A673 (cell line): ENCODE measurements at regions of chr12 and their contacts with region 1.

Region 1: GRCh38 chr12:17197971-17198370 is 592.0 kb upstream of the LMO3 start:
- DNase-seq: no peak
- H3K4me3 ChIP-seq: no peak overlapping the region
- H3K27ac ChIP-seq: no peak overlapping the region
- H3K4me1 ChIP-seq: no peaks in the 10 kb centered on the region
- H3K27me3 ChIP-seq: no peaks in the 10 kb centered on the region
- CTCF ChIP-seq: no peak

Region 2: GRCh38 chr12:16385782-16386646 is 812.0 kb before region 1 on chr12:
- CTCF ChIA-PET with region 1: no interaction called
- POLR2A ChIA-PET with region 1: no interaction called
- intact Hi-C with region 1: no loop called
- DNase-seq: peak; percentile 91
- H3K4me3 ChIP-seq: no peak overlapping the region
- H3K27ac ChIP-seq: peak overlapping the region; percentile 48
- H3K4me1 ChIP-seq: peaks cover 13% of the 10 kb centered on the region
- H3K27me3 ChIP-seq: no peaks in the 10 kb centered on the region
- CTCF ChIP-seq: peak; percentile 75

Region 3: DNA sequence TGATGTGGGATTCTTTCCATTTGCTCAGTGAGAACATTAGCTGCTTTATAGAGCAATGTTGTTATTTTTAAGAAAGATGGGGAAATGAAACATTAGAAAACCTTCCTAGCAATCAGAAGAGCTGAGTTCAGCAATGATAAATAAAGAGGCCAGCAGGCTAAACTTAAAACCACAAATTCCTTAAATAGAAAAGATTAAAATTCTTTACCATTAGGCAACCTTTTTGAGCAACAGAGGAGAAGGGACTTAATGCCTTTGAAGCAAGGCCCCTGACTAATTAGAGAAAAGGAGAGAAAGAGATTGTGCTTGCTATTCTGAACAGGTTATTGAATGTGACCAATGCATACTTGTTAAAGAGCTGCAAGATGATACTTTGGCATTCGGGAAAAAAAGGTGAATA is 431.2 kb before region 1 on chr12:
- CTCF ChIA-PET with region 1: no interaction called
- POLR2A ChIA-PET with region 1: no interaction called
- intact Hi-C with region 1: no loop called
- DNase-seq: peak; percentile 34
- H3K4me3 ChIP-seq: no peak overlapping the region
- H3K27ac ChIP-seq: no peak overlapping the region
- H3K4me1 ChIP-seq: peaks cover 6% of the 10 kb centered on the region
- H3K27me3 ChIP-seq: no peaks in the 10 kb centered on the region
- CTCF ChIP-seq: no peak

Region 4: GRCh38 chr12:17151917-17152316 is 46.1 kb before region 1 on chr12:
- CTCF ChIA-PET with region 1: no interaction called
- POLR2A ChIA-PET with region 1: no interaction called
- intact Hi-C with region 1: loop called (anchors 5 kb)
- DNase-seq: no peak
- H3K4me3 ChIP-seq: no peak overlapping the region
- H3K27ac ChIP-seq: no peak overlapping the region
- H3K4me1 ChIP-seq: no peaks in the 10 kb centered on the region
- H3K27me3 ChIP-seq: no peaks in the 10 kb centered on the region
- CTCF ChIP-seq: no peak